Activated T-helper 2 cell treated with anti-CD3 and anti-CD28 coated beads, Interferon-gamma antibody, Interleukin-2, Interleukin-4, amounts not matched to agents 10 μg/mL and 5 μg/mL and 100 μg/mL, durations not matched to agents 14 hours and 24 hours and 36 hours (primary cell): ENCODE measurements at regions of chr9 and their contacts with region 1.

Region 1: GRCh38 chr9:109411798-109412352 is 86.2 kb downstream of the PTPN3 start:
- DNase-seq: no peak
- H3K4me3 Mint-ChIP-seq: peak overlapping the region; percentile 82
- H3K27ac Mint-ChIP-seq: peak overlapping the region; percentile 97
- H3K4me1 Mint-ChIP-seq: peaks cover 68% of the 10 kb centered on the region
- H3K27me3 Mint-ChIP-seq: no peaks in the 10 kb centered on the region

Region 2: GRCh38 chr9:108933718-108934322 is 478.1 kb before region 1 on chr9 and contains the start of gene ELP1:
- intact Hi-C with region 1: loop called (anchors 10 kb)
- DNase-seq: peak; percentile 89
- H3K4me3 Mint-ChIP-seq: peak within 1 kb of the TSS; percentile 98
- H3K27ac Mint-ChIP-seq: peak within 1 kb of the TSS; percentile 94
- H3K4me1 Mint-ChIP-seq: peaks cover 26% of the 10 kb centered on the region
- H3K27me3 Mint-ChIP-seq: no peaks in the 10 kb centered on the region
- total RNA-seq, gene ELP1: 31.7 and 32.7 TPM in 2 replicates

Region 3: GRCh38 chr9:109244157-109245132 is 167.4 kb before region 1 on chr9:
- intact Hi-C with region 1: loop called (anchors 2 kb)
- DNase-seq: peak; percentile 50
- H3K4me3 Mint-ChIP-seq: no peak overlapping the region
- H3K27ac Mint-ChIP-seq: no peak overlapping the region
- H3K4me1 Mint-ChIP-seq: no peaks in the 10 kb centered on the region
- H3K27me3 Mint-ChIP-seq: peaks cover 20% of the 10 kb centered on the region

Region 4: DNA sequence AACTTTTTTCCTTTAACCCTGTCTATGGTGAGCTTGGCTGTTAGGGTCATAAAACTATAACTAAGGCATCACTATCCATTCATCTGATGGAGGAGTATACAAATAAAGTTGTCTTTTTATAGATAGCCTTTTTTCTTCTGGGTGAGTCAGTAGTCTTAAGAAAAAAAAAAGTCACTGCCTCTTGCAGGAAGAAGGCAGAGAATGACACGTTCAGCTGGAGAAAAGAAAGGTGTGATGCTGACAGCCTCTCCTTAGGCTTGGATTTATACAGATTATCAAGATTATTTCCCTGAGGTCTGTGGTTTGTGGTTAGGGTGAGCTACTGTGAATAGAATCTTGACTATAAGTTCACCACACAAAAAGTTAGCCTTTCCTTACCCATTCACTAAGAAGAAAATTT is 114.0 kb before region 1 on chr9:
- intact Hi-C with region 1: no loop called
- DNase-seq: no peak
- H3K4me3 Mint-ChIP-seq: no peak overlapping the region
- H3K27ac Mint-ChIP-seq: no peak overlapping the region
- H3K4me1 Mint-ChIP-seq: peaks cover 12% of the 10 kb centered on the region
- H3K27me3 Mint-ChIP-seq: peaks cover 15% of the 10 kb centered on the region

Region 5: GRCh38 chr9:109401168-109401989 is 10.5 kb before region 1 on chr9:
- intact Hi-C with region 1: loop called (anchors 1 kb)
- DNase-seq: peak; percentile 28
- H3K4me3 Mint-ChIP-seq: no peak overlapping the region
- H3K27ac Mint-ChIP-seq: peak overlapping the region; percentile 25
- H3K4me1 Mint-ChIP-seq: peaks cover 19% of the 10 kb centered on the region
- H3K27me3 Mint-ChIP-seq: peaks cover 3% of the 10 kb centered on the region

Region 6: GRCh38 chr9:109453210-109453842 is 41.5 kb after region 1 on chr9:
- intact Hi-C with region 1: no loop called
- DNase-seq: no peak
- H3K4me3 Mint-ChIP-seq: no peak overlapping the region
- H3K27ac Mint-ChIP-seq: peak overlapping the region; percentile 31
- H3K4me1 Mint-ChIP-seq: peaks cover 30% of the 10 kb centered on the region
- H3K27me3 Mint-ChIP-seq: peaks cover 10% of the 10 kb centered on the region

Region 7: GRCh38 chr9:109463924-109464625 is 52.2 kb after region 1 on chr9:
- intact Hi-C with region 1: loop called (anchors 1 kb)
- DNase-seq: no peak
- H3K4me3 Mint-ChIP-seq: peak overlapping the region; percentile 31
- H3K27ac Mint-ChIP-seq: peak overlapping the region; percentile 93
- H3K4me1 Mint-ChIP-seq: peaks cover 68% of the 10 kb centered on the region
- H3K27me3 Mint-ChIP-seq: peaks cover 3% of the 10 kb centered on the region